ENCODE measurements at regions of chr17 and their contacts with region 1.

Region 1: GRCh38 chr17:7687908-7688807 is at the start of gene WRAP53:
- DNase-seq: peak; percentile 97 to 100
- H3K4me3 ChIP-seq: peak within 1 kb of the TSS; percentile 70 to 79
- H3K27ac ChIP-seq: peak within 1 kb of the TSS; percentile 87 to 94
- H3K4me1 ChIP-seq: peaks cover 9 to 16% of the 10 kb centered on the region in 2 donors
- H3K27me3 ChIP-seq: no peaks in the 10 kb centered on the region
- CTCF ChIP-seq: peak; percentile 94 to 99 (median 99)
- total RNA-seq, gene WRAP53: 1.5 TPM

Region 2: GRCh38 chr17:6716736-6717135 is 971.4 kb before region 1 on chr17:
- intact Hi-C with region 1: no loop called
- DNase-seq: no peak
- H3K4me3 ChIP-seq: no peak overlapping the region
- H3K27ac ChIP-seq: no peak overlapping the region
- H3K4me1 ChIP-seq: no peaks in the 10 kb centered on the region
- H3K27me3 ChIP-seq: peaks cover 16% of the 10 kb centered on the region
- CTCF ChIP-seq: no peak

Region 3: GRCh38 chr17:7239091-7240027 is 448.8 kb before region 1 on chr17 and contains the start of gene PHF23:
- intact Hi-C with region 1: loop called (anchors 2 kb)
- DNase-seq: peak; percentile 99 to 100
- H3K4me3 ChIP-seq: peak within 1 kb of the TSS; percentile 92 to 99
- H3K27ac ChIP-seq: peak within 1 kb of the TSS; percentile 88 to 96
- H3K4me1 ChIP-seq: peaks cover 12 to 25% of the 10 kb centered on the region in 2 donors
- H3K27me3 ChIP-seq: no peaks in the 10 kb centered on the region
- CTCF ChIP-seq: peak in 1 of 3 experiments; percentile 37
- total RNA-seq, gene PHF23: 13.3 TPM

Region 4: GRCh38 chr17:7351665-7352501 is 336.3 kb before region 1 on chr17 and contains the start of gene KCTD11:
- intact Hi-C with region 1: loop called (anchors 5 kb)
- DNase-seq: peak; percentile 69 to 97
- H3K4me3 ChIP-seq: peak within 1 kb of the TSS; percentile 71 to 98
- H3K27ac ChIP-seq: peak within 1 kb of the TSS; percentile 96 to 100
- H3K4me1 ChIP-seq: peaks cover 11 to 36% of the 10 kb centered on the region in 2 donors
- H3K27me3 ChIP-seq: no peaks in the 10 kb centered on the region
- CTCF ChIP-seq: peak in 2 of 3 experiments; percentile 57 to 59
- total RNA-seq, gene KCTD11: 14.6 TPM

Region 5: GRCh38 chr17:7484067-7484918 is 203.9 kb before region 1 on chr17 and contains the start of gene POLR2A:
- intact Hi-C with region 1: loop called (anchors 10 kb)
- DNase-seq: peak; percentile 96 to 99
- H3K4me3 ChIP-seq: peak within 1 kb of the TSS; percentile 71 to 84
- H3K27ac ChIP-seq: peak within 1 kb of the TSS; percentile 98 to 100
- H3K4me1 ChIP-seq: peaks cover 12 to 50% of the 10 kb centered on the region in 2 donors
- H3K27me3 ChIP-seq: no peaks in the 10 kb centered on the region
- CTCF ChIP-seq: no peak
- total RNA-seq, gene POLR2A: 69.5 TPM

Region 6: DNA sequence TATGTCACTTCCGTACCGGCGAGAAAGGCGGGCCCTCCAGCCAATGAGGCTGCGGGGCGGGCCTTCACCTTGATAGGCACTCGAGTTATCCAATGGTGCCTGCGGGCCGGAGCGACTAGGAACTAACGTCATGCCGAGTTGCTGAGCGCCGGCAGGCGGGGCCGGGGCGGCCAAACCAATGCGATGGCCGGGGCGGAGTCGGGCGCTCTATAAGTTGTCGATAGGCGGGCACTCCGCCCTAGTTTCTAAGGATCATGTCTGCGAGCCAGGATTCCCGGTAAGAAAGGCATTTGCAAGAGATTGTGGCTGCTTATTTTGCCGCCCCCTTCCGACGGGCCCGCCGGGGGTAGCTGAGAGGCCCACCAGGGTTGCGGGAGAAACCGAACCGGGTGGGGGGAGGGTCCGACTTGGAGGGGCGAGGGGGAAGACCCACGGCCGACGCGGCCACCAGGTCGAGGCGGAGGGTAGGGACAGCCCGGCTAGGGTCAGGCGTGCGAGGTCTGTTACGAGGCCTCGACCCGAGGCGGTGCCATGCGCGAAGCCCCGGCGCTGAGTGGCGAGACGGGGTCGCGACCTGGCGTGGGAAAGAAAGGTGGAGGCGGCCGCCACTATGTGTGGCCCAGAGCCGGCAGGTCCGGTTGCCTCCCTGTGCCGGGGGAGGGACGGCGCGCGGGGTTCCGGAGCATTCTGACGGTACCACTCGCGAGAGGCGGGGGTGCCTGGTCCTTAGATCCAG is 115.4 kb before region 1 on chr17:
- intact Hi-C with region 1: loop called (anchors 1 kb)
- DNase-seq: peak; percentile 99 to 100
- H3K4me3 ChIP-seq: peak overlapping the region; percentile 78 to 94
- H3K27ac ChIP-seq: peak overlapping the region; percentile 93 to 99
- H3K4me1 ChIP-seq: peaks cover 0 to 15% of the 10 kb centered on the region in 2 donors
- H3K27me3 ChIP-seq: no peaks in the 10 kb centered on the region
- CTCF ChIP-seq: no peak

Region 7: GRCh38 chr17:7627250-7628121 is 60.7 kb before region 1 on chr17 and contains the start of gene SAT2:
- intact Hi-C with region 1: loop called (anchors 2 kb)
- DNase-seq: peak; percentile 80 to 96
- H3K4me3 ChIP-seq: peak within 1 kb of the TSS; percentile 70 to 76
- H3K27ac ChIP-seq: peak within 1 kb of the TSS; percentile 82 to 83
- H3K4me1 ChIP-seq: peaks cover 0 to 4% of the 10 kb centered on the region in 2 donors
- H3K27me3 ChIP-seq: no peaks in the 10 kb centered on the region
- CTCF ChIP-seq: no peak
- total RNA-seq, gene SAT2: 22.6 TPM

Region 8: DNA sequence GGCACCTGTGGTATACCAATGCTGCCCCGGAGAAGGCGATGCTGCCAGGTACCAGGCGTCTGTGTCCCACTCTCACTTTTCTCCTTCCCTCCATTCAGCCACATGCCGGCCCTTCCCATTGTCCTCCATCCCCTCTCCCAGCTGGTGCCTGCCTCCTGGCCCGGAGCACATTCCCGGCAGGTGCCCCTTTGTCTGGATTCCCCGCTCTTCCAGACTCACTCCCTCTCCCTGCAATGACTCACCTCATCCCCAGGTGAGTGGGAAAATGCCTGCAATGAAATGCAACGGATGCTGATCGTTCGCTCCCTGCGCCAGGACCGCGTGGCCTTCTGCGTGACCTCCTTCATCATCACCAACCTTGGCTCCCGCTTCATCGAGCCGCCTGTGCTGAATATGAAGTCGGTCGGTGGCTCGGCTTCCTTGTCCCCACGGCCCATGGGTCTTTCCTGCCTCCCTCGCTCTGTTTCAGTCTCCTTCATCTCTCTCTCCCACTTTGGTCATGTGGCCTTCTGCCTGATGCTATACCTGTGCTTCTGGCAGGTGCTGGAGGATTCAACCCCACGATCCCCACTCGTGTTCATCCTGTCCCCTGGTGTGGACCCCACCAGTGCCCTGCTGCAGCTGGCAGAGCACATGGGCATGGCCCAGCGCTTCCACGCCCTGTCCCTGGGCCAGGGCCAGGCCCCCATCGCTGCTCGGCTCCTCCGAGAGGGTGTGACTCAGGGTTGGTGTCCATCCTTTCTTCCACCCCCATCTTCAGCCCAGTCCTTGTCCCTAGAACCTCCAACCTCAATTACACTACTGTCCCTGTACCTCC is 135.6 kb after region 1 on chr17:
- intact Hi-C with region 1: no loop called
- DNase-seq: no peak
- H3K4me3 ChIP-seq: no peak overlapping the region
- H3K27ac ChIP-seq: no peak overlapping the region
- H3K4me1 ChIP-seq: peaks cover 0 to 6% of the 10 kb centered on the region in 2 donors
- H3K27me3 ChIP-seq: no peaks in the 10 kb centered on the region
- CTCF ChIP-seq: no peak

Region 9: GRCh38 chr17:7834962-7835813 is 147.0 kb after region 1 on chr17:
- intact Hi-C with region 1: loop called (anchors 2 kb)
- DNase-seq: peak; percentile 93 to 99
- H3K4me3 ChIP-seq: peak overlapping the region; percentile 68 to 80
- H3K27ac ChIP-seq: peak overlapping the region; percentile 91 to 98
- H3K4me1 ChIP-seq: peaks cover 8 to 29% of the 10 kb centered on the region in 2 donors
- H3K27me3 ChIP-seq: no peaks in the 10 kb centered on the region
- CTCF ChIP-seq: peak; percentile 82 to 94 (median 85)